GM12878 (cell line): ENCODE measurements at regions of chr18 and their contacts with region 1.

Region 1: GRCh38 chr18:54261894-54262293 is 7.4 kb upstream of the POLI start:
- DNase-seq: peak; percentile 85
- ATAC-seq: peak; percentile 80
- H3K4me3 ChIP-seq: peak overlapping the region; percentile 44; the same call in 1 of the 2 replicates
- H3K27ac ChIP-seq: peak overlapping the region; percentile 94
- H3K4me1 ChIP-seq: peaks cover 49% of the 10 kb centered on the region
- H3K27me3 ChIP-seq: no peaks in the 10 kb centered on the region
- CTCF ChIP-seq: no peak
- EP300 ChIP-seq: peak; percentile 22 to 67; a peak in 2 of 4 replicates
- POLR2A ChIP-seq: no peak
- RAD21 ChIP-seq: 0 out of 2 replicates have a peak, but pooled peaks have one; percentile 11

Region 2: DNA sequence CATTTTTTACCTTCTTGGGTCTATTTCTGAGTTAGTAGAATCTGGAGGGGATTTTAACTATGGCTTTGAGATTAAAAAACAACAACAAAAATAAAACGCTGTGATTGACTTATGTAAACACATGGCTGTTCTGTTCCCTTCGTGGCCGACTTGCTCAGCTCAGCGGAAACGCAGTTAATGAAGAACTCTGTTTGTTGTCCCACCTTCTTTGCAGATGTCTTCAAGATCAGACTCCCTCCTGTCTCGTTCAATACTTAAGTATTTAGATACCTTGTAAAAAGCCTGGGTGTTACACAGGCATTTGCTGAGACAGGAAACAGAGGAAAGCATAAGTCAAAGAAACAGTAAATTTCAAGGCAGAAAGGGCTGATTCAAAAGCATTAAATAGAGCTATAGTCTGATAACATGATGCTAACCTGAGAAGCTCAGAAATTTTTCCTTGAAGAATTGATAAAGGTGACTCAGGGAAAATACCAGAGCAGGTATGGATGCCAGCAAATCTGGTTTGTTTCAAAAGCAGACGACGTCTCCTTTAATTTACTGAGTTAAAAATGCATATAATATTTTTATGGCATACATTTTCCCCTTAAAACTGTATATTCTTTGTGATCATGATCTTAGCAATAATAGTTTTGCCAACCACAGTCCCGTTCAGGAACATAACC is 14.3 kb before region 1 on chr18:
- CTCF ChIA-PET with region 1: interaction called, 5 read pairs
- POLR2A ChIA-PET with region 1: interaction called, 7 read pairs
- RAD21 ChIA-PET with region 1: interaction called, 3 read pairs
- SMC1A ChIA-PET with region 1: interaction called, 14 read pairs
- in situ Hi-C with region 1: no loop called
- intact Hi-C with region 1: loop called (anchors 1 kb)
- DNase-seq: no peak
- ATAC-seq: no peak
- H3K4me3 ChIP-seq: no peak overlapping the region
- H3K27ac ChIP-seq: peak overlapping the region; percentile 23
- H3K4me1 ChIP-seq: peaks cover 34% of the 10 kb centered on the region
- H3K27me3 ChIP-seq: no peaks in the 10 kb centered on the region
- CTCF ChIP-seq: no peak
- EP300 ChIP-seq: no peak
- POLR2A ChIP-seq: no peak
- RAD21 ChIP-seq: no peak